Brain microvascular endothelial cell (primary cell): ENCODE measurements at regions of chr1 and their contacts with region 1.

Region 1: GRCh38 chr1:181166377-181167196 is 78.1 kb downstream of the IER5 start:
- DNase-seq: peak; percentile 73
- H3K4me3 ChIP-seq: no peak overlapping the region
- H3K27ac ChIP-seq: no peak overlapping the region
- H3K27me3 ChIP-seq: no peaks in the 10 kb centered on the region
- CTCF ChIP-seq: peak; percentile 84

Region 2: GRCh38 chr1:180881806-180882509 is 284.6 kb before region 1 on chr1:
- in situ Hi-C with region 1: loop called (anchors 25 kb)
- DNase-seq: no peak
- H3K4me3 ChIP-seq: no peak overlapping the region
- H3K27ac ChIP-seq: no peak overlapping the region
- H3K27me3 ChIP-seq: no peaks in the 10 kb centered on the region
- CTCF ChIP-seq: peak; percentile 40

Region 3: DNA sequence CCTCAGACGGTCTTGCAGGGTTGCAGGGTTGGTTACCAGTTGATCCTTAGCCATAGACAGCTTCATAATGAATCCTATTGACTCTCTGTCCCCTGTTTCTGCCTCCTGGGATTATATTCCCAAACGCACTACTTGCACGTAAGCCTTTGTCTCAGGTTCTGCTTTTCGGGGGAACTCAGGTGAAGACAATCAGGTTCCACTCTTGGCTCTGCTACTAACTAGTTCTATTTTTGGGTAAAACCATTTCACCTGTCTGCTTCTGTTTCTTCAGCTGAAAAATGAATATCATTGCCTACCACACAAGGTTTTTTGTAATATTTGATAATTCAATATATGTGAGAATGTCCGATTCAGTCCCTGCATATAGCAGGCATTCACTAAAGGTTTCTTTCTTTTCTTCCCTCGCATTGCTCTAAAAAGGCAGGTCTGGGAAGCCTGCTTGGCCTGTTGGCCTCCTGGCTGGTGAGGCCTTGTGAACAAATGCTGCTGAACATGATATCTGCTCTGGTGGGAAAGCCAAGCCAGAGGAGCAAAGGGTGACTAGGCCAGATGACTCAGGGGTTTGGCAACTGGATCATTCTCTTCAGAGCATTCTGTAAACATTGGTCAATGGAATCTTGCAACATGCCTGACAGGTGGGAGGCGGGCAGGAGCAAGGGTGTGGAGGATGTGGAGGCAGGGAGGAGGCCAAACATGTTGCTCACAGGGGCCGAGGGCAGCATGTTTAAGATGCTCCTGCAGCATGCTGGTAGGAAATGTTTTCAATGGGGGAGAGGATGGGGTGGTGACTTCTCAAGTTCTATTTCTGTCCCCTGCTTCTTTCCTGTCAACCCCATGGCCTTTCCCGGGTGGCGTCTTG is 54.3 kb before region 1 on chr1:
- in situ Hi-C with region 1: no loop called
- DNase-seq: peak; percentile 95
- H3K4me3 ChIP-seq: no peak overlapping the region
- H3K27ac ChIP-seq: peak overlapping the region; percentile 65
- H3K27me3 ChIP-seq: no peaks in the 10 kb centered on the region
- CTCF ChIP-seq: no peak

Region 4: DNA sequence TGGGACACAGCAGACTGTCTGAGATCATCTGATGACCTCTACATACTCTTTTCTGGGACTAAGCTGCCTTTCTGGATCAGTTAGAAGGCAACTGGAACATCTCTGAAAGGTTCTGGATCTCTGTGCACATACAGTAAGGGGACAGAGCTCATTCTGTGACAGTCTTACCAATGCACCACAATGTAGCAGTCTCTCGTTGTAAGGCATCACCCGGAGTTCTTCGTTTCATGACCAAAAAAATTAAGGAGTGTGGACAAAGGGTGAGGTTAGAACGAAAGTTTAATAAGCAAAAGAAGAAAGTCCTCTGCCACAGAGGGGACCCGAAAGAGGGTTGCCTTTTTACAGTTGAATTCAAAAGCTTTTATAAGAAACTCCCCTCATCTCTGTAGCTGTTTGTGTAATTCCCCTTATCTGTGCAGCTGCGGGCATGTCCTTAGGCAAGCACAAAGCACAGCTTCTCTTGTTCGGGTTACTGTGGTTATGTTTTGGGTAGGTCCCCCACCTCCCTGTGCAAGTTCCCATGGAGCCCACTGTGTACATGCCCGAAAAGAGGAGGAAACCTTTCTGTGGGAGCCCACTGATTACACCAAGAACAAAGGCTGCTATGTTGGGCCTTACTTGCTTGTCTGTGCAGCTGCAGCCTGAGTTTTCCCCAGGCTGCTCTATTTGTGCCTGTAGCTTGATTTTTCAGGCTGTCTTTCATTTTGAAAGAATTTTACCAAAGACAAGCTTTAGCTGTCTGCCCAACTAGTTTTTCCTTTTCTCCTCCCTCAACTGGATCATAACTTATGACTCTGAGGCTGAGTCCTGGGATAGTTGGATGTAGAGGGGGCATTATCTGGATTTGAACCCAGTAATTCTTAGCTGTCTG is 263.7 kb after region 1 on chr1:
- in situ Hi-C with region 1: no loop called
- DNase-seq: no peak
- H3K4me3 ChIP-seq: no peak overlapping the region
- H3K27ac ChIP-seq: no peak overlapping the region
- H3K27me3 ChIP-seq: no peaks in the 10 kb centered on the region
- CTCF ChIP-seq: no peak